H1 (cell line): ENCODE measurements at regions of chr2 and their contacts with region 1.

Region 1: DNA sequence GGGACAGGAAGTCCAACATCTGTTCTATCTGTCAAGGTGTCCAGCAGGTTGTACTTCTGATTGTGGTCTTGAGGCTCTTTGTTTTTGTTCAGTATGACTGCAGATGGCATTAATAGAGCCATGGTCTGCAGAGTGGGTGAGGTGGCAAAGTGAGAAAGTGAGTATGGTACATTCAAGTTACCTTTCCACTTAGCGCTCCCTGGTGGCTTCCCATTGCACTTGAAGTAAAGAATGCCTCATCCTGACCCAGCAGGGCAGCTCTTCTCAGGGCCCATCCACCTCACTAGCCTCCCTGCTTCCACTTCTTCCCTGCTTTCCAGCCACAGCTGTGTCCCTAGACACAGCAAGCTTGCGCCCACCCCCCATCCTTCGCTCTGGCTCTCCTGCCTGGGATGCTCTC is 148.0 kb upstream of the ALPP start:
- DNase-seq: peak; percentile 13 to 74
- H3K4me3 ChIP-seq: no peak overlapping the region
- H3K27ac ChIP-seq: no peak overlapping the region
- H3K4me1 ChIP-seq: peaks cover 5 to 13% (median 8%) of the 10 kb centered on the region in 4 experiments
- H3K27me3 ChIP-seq: no peaks in the 10 kb centered on the region
- CTCF ChIP-seq: peak; percentile 58 to 87 (median 59)
- EP300 ChIP-seq: no peak
- POLR2A ChIP-seq: no peak
- RAD21 ChIP-seq: peak; percentile 74 to 78

Region 2: DNA sequence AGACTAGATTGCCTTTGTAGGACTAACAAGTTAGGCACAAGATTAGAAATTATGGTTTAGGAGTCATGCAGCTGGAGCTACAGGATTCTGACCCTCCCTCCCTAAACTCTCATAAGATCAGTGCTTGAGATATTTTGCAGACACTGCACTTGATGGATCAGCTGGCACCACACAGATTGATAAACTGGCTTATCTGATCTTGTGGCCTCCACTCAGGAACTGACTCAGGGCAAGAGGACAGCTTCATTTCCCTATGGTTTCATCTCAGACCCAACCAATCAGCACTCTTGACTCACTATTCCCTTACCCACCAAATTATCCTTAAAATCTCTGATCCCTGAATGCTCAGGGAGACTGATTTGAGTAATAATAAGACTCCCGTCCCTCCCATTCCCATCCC is 116.7 kb before region 1 on chr2:
- CTCF ChIA-PET with region 1: interaction called, 13 read pairs
- POLR2A ChIA-PET with region 1: no interaction called
- DNase-seq: no peak
- H3K4me3 ChIP-seq: no peak overlapping the region
- H3K27ac ChIP-seq: no peak overlapping the region
- H3K4me1 ChIP-seq: peaks cover 0 to 2% (median 0%) of the 10 kb centered on the region in 4 experiments; a peak in 3 of 7 replicates
- H3K27me3 ChIP-seq: no peaks in the 10 kb centered on the region
- CTCF ChIP-seq: no peak
- EP300 ChIP-seq: no peak
- POLR2A ChIP-seq: no peak
- RAD21 ChIP-seq: no peak

Region 3: DNA sequence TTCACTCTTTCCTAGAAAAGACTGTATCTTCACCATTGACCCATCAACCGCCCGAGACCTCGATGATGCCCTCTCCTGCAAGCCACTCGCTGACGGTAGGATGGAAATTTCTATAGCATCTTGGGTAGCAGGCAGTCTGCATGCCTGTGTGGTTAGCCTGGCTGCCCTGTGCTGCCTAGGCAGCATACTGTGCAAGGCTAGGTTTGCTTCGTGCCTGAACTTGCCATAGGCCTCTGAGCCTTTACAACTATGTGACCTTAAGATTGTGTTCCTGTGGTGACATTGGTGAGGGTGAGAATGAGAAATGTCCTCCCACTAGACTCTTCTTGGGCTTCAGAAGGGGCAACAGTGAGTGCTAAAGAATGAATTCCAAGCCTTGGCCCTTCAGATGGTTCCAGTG is 20.2 kb before region 1 on chr2:
- CTCF ChIA-PET with region 1: interaction called, 11 read pairs
- POLR2A ChIA-PET with region 1: no interaction called
- DNase-seq: peak in 1 of 2 experiments; percentile 10
- H3K4me3 ChIP-seq: no peak overlapping the region
- H3K27ac ChIP-seq: no peak overlapping the region
- H3K4me1 ChIP-seq: no peaks in the 10 kb centered on the region
- H3K27me3 ChIP-seq: no peaks in the 10 kb centered on the region
- CTCF ChIP-seq: no peak
- EP300 ChIP-seq: no peak
- POLR2A ChIP-seq: no peak
- RAD21 ChIP-seq: no peak

Region 4: DNA sequence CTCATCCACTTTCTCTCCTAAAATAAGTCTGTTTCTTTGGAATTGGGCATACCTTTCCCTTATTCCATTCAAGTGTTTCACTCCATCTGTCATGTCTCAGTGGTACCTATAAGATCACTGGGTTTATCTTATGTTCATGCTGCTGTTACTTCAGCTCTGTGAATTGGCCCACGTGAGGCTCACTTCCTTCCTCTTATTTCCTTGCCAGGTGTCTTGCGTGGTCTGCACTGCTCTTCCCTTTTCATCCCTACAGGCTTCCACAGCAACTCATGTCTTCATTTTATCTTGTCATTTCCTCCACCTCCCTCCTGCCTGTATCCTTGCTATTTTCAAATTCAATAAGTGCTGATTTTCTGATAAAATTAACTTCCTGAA is 11.1 kb before region 1 on chr2:
- CTCF ChIA-PET with region 1: interaction called, 18 read pairs
- POLR2A ChIA-PET with region 1: no interaction called
- DNase-seq: no peak
- H3K4me3 ChIP-seq: no peak overlapping the region
- H3K27ac ChIP-seq: no peak overlapping the region
- H3K4me1 ChIP-seq: no peaks in the 10 kb centered on the region
- H3K27me3 ChIP-seq: no peaks in the 10 kb centered on the region
- CTCF ChIP-seq: no peak
- EP300 ChIP-seq: no peak
- POLR2A ChIP-seq: no peak
- RAD21 ChIP-seq: no peak

Region 5: GRCh38 chr2:232255033-232255432 is 24.5 kb after region 1 on chr2:
- CTCF ChIA-PET with region 1: interaction called, 10 read pairs
- POLR2A ChIA-PET with region 1: no interaction called
- DNase-seq: no peak
- H3K4me3 ChIP-seq: no peak overlapping the region
- H3K27ac ChIP-seq: no peak overlapping the region
- H3K4me1 ChIP-seq: no peaks in the 10 kb centered on the region
- H3K27me3 ChIP-seq: no peaks in the 10 kb centered on the region
- CTCF ChIP-seq: no peak
- EP300 ChIP-seq: no peak
- POLR2A ChIP-seq: no peak
- RAD21 ChIP-seq: no peak